ENCODE measurements at regions of chr2 and their contacts with region 1.

Region 1: DNA sequence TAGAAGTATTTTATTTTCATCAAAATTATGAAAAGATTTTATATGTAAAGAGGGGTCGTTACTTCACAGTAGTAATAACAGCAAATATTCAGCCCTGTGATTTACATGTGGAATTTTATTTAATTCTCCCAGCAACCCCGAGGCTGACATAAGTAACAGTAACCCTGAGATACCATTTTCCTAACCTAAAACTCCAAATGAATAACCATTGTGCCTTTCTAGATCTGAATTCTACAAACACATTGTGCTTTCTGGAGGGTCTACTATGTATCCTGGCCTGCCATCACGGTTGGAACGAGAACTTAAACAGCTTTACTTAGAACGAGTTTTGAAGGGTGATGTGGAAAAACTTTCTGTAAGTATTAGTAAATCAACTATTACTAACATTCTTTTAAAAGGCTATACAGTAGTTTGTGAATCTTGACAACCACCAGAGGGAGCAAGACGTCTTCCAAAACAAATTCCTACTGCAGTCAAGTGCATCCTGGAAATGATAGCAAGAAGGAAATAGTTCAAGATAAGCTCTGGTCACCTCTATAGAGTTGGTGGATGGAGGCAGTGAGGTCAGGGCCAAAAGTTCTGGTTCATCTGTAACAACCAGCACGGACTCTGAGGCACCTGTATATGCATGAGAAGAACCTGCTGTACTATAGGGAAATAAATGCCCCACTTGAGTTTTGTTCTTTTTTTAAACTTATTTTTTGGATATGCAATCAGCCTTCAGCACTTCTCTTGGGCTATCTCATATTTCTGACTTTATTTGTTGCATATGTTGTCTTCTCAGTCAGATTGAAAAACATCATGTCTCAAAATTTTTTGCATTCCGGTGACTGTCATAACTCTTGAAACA is 37.4 kb downstream of the ACTR2 start:
- DNase-seq: no peak
- ATAC-seq: peak; percentile 60

Region 2: GRCh38 chr2:65553504-65554074 is 288.5 kb after region 1 on chr2:
- intact Hi-C with region 1: loop called (anchors 1 kb)
- DNase-seq: no peak
- ATAC-seq: no peak

Region 3: GRCh38 chr2:65576861-65577601 is 312.0 kb after region 1 on chr2:
- intact Hi-C with region 1: loop called (anchors 5 kb)
- DNase-seq: no peak
- ATAC-seq: no peak

Measured in Right ventricle myocardium inferior (tissue), 1 donor.